Endothelial cell of umbilical vein (primary cell): ENCODE measurements at regions of chr10 and their contacts with region 1.

Region 1: GRCh38 chr10:119859420-119860258 is 13.0 kb downstream of the MCMBP start:
- DNase-seq: peak; percentile 74
- H3K4me3 ChIP-seq: no peak overlapping the region
- H3K27ac ChIP-seq: no peak overlapping the region
- H3K4me1 ChIP-seq: peaks cover 5% of the 10 kb centered on the region
- H3K27me3 ChIP-seq: no peaks in the 10 kb centered on the region
- CTCF ChIP-seq: peak; percentile 27 to 36
- POLR2A ChIP-seq: no peak

Region 2: DNA sequence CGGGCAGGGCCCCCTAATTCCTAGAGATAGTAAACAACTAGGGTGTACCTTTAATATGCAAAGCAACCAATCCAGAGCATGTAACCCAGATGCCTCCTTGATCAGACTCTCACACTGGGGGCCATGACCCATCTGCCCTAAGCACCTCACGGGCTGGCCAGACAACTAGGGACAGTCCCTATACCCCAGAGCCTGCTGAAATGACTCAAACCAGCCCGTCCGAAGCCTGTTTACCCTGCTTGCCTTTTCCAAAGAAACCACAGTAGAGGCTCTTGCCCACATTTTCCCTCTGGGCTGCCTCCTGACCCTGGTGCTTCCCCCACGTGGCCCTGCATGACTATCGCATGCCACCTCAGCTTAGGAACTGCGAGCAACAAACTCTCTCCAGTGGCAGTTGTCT is 363.4 kb before region 1 on chr10:
- CTCF ChIA-PET with region 1: no interaction called
- POLR2A ChIA-PET with region 1: no interaction called
- dilution Hi-C with region 1: no loop called
- intact Hi-C with region 1: no loop called
- DNase-seq: no peak
- H3K4me3 ChIP-seq: no peak overlapping the region
- H3K27ac ChIP-seq: no peak overlapping the region
- H3K4me1 ChIP-seq: no peaks in the 10 kb centered on the region
- H3K27me3 ChIP-seq: no peaks in the 10 kb centered on the region
- CTCF ChIP-seq: no peak
- POLR2A ChIP-seq: no peak

Region 3: DNA sequence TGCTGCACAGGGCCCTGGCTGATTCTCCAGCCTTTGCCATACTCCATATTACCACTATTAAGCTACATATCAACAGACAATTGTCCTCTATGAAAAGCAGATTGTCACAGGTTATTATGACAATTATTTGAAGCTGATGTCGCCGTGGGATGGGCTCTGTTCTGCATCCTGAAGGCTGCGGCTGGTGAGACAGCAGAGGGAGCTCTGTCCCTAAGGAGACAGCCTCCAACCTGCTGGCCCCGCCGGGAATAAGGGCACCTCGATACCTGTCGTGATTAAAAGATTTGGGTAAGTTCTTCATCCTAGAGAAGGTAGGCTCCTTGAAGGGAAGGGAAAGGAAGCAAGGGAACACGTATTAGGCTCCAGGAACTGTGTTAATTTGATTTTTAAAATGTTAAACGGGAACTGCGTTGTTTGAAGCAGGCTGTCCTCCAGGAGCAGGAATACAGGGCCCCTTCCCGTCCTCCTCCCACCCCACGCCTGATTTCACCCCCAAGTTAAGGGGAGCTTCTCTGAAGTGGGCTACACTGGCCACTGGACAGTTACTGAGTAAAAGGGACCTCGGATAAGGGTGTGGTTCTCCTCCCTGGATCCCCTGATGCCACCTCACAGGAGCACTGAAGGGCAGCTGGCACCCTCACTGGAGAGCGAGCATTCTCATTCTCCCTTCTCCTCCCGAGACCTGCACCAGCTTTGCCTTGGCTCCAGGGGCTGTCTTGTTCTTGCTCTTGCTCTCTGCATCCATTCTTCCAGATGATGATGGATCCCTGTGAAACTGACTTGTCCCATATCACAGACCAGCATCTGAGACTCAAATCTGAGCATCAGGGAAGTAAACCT is 251.1 kb before region 1 on chr10:
- CTCF ChIA-PET with region 1: interaction called, 33 read pairs
- POLR2A ChIA-PET with region 1: no interaction called
- dilution Hi-C with region 1: no loop called
- intact Hi-C with region 1: loop called (anchors 1 kb)
- DNase-seq: peak; percentile 42
- H3K4me3 ChIP-seq: no peak overlapping the region
- H3K27ac ChIP-seq: no peak overlapping the region
- H3K4me1 ChIP-seq: no peaks in the 10 kb centered on the region
- H3K27me3 ChIP-seq: no peaks in the 10 kb centered on the region
- CTCF ChIP-seq: peak; percentile 66 to 68
- POLR2A ChIP-seq: no peak

Region 4: GRCh38 chr10:119761106-119761505 is 98.5 kb before region 1 on chr10:
- CTCF ChIA-PET with region 1: interaction called, 19 read pairs
- POLR2A ChIA-PET with region 1: no interaction called
- dilution Hi-C with region 1: no loop called
- intact Hi-C with region 1: no loop called
- DNase-seq: peak; percentile 64
- H3K4me3 ChIP-seq: no peak overlapping the region
- H3K27ac ChIP-seq: no peak overlapping the region
- H3K4me1 ChIP-seq: peaks cover 14% of the 10 kb centered on the region
- H3K27me3 ChIP-seq: no peaks in the 10 kb centered on the region
- CTCF ChIP-seq: no peak
- POLR2A ChIP-seq: no peak

Region 5: DNA sequence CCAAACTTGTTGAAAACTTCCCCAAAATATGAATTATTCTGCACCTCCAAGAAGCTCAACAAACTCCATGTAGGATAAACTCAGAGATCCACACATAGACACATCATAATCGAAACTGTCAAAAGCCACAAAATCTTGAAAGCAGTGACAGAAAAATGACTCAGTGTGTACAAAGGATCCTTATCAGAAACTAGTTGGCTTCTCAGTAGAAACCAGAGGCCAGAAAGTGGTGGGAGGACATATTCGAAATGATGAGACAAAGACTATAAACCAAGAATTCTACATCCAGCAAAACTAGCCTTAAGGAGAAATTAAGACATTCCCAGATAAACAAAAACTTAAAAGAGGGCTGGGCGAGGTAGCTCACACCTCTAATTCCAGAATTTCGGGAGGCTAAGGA is 25.5 kb before region 1 on chr10:
- CTCF ChIA-PET with region 1: interaction called, 11 read pairs
- POLR2A ChIA-PET with region 1: no interaction called
- dilution Hi-C with region 1: no loop called
- intact Hi-C with region 1: no loop called
- DNase-seq: no peak
- H3K4me3 ChIP-seq: no peak overlapping the region
- H3K27ac ChIP-seq: no peak overlapping the region
- H3K4me1 ChIP-seq: no peaks in the 10 kb centered on the region
- H3K27me3 ChIP-seq: no peaks in the 10 kb centered on the region
- CTCF ChIP-seq: no peak
- POLR2A ChIP-seq: no peak

Region 6: GRCh38 chr10:119872860-119873681 is 13.4 kb after region 1 on chr10:
- CTCF ChIA-PET with region 1: interaction called, 41 read pairs
- POLR2A ChIA-PET with region 1: interaction called, 3 read pairs
- dilution Hi-C with region 1: no loop called
- intact Hi-C with region 1: no loop called
- DNase-seq: peak; percentile 92
- H3K4me3 ChIP-seq: peak overlapping the region; percentile 20 to 96 (median 96)
- H3K27ac ChIP-seq: peak overlapping the region; percentile 81
- H3K4me1 ChIP-seq: peaks cover 18% of the 10 kb centered on the region
- H3K27me3 ChIP-seq: no peaks in the 10 kb centered on the region
- CTCF ChIP-seq: no peak
- POLR2A ChIP-seq: peak; percentile 79

Region 7: GRCh38 chr10:121237718-121238117 is 1378.1 kb after region 1 on chr10:
- CTCF ChIA-PET with region 1: no interaction called
- POLR2A ChIA-PET with region 1: no interaction called
- dilution Hi-C with region 1: no loop called
- intact Hi-C with region 1: no loop called
- DNase-seq: no peak
- H3K4me3 ChIP-seq: no peak overlapping the region
- H3K27ac ChIP-seq: no peak overlapping the region
- H3K4me1 ChIP-seq: no peaks in the 10 kb centered on the region
- H3K27me3 ChIP-seq: no peaks in the 10 kb centered on the region
- CTCF ChIP-seq: no peak
- POLR2A ChIP-seq: no peak